ENCODE measurements at regions of chr17 and their contacts with region 1.

Region 1: DNA sequence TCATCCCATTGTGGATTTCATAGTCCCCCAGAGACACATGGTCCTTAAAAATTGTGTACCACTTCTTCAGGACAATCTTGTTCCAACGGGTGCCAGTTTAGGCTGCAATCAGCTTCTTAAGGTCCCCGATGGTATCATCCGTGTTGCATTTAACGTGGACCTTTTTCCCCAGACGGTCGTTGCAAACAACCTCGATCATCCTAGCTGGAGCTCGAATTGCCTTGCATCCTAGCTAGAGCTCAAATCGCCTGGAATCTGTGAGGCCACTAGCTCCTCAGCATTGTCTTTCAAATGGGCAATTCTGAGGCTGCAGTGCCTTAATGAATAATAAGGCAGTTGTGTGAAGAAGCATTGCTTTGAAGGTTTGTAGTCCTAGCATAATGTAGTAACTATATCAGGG is 37.7 kb upstream of the RHBDL3 start:
- DNase-seq: peak; percentile 34
- ATAC-seq: peak; percentile 90
- H3K4me3 Mint-ChIP-seq: peak overlapping the region; percentile 51
- H3K27ac Mint-ChIP-seq: peak overlapping the region; percentile 96
- H3K4me1 Mint-ChIP-seq: peaks cover 35% of the 10 kb centered on the region
- H3K27me3 Mint-ChIP-seq: no peaks in the 10 kb centered on the region
- CTCF ChIP-seq: no peak

Region 2: DNA sequence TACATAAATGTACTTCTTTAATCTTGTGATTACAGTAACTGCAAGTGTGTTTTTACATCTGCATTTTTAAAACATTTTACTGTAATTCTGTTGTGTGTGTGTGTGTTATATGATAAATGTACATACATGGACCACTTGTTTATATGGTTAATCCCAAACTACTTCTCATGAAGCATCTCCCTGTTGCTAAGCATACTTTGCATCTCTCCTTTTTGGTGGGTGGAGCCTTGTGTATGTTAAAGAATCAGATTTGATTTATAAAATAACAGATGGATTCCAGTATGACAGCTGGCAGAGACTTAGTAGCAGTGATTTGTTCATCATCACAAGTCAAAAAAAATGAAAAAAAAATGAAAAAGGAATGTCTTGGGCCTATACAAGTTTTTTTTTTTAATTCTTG is 18.3 kb before region 1 on chr17:
- CTCF ChIA-PET with region 1: no interaction called
- POLR2A ChIA-PET with region 1: no interaction called
- DNase-seq: no peak
- ATAC-seq: no peak
- H3K4me3 Mint-ChIP-seq: no peak overlapping the region
- H3K27ac Mint-ChIP-seq: no peak overlapping the region
- H3K4me1 Mint-ChIP-seq: no peaks in the 10 kb centered on the region
- H3K27me3 Mint-ChIP-seq: no peaks in the 10 kb centered on the region
- CTCF ChIP-seq: no peak

Region 3: GRCh38 chr17:32240750-32241149 is 12.8 kb after region 1 on chr17:
- CTCF ChIA-PET with region 1: interaction called, 12 read pairs
- POLR2A ChIA-PET with region 1: no interaction called
- DNase-seq: no peak
- ATAC-seq: peak; percentile 70
- H3K4me3 Mint-ChIP-seq: no peak overlapping the region
- H3K27ac Mint-ChIP-seq: no peak overlapping the region
- H3K4me1 Mint-ChIP-seq: peaks cover 11% of the 10 kb centered on the region; the same call in 1 of the 2 replicates
- H3K27me3 Mint-ChIP-seq: no peaks in the 10 kb centered on the region; the same call in 1 of the 2 replicates
- CTCF ChIP-seq: no peak

Region 4: DNA sequence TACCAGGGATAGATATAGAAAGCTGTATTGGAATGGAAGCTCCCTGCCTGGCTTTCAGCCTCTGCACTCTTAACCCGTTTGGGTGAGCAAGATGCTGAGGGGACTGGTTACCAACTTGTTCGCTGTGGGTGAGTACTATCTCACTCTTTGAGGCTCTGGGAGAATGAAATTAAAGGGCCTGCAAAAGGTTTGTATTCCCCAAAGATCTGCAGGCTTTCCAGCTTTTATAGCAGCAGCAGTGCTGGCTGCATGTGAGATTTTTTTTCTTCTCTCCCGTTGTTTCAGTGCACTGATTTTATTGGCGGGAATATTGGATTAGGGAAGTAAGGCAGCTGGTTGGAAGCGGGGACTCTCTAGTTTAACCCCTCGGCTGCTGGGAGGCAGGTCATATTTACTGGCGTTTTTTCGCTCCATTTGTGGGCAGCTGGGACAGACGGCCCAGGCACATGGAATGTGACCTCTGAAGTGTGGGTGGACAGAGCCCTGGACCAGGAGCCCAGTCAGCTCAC is 83.2 kb after region 1 on chr17:
- CTCF ChIA-PET with region 1: no interaction called
- POLR2A ChIA-PET with region 1: no interaction called
- DNase-seq: no peak
- ATAC-seq: peak; percentile 50
- H3K4me3 Mint-ChIP-seq: peak overlapping the region; percentile 36; the same call in 1 of the 2 replicates
- H3K27ac Mint-ChIP-seq: 0 out of 2 replicates have a peak overlapping the region, but pooled peaks have one; percentile 16
- H3K4me1 Mint-ChIP-seq: peaks cover 42% of the 10 kb centered on the region
- H3K27me3 Mint-ChIP-seq: no peaks in the 10 kb centered on the region
- CTCF ChIP-seq: no peak

Measured in WTC11 (cell line).